CD4-positive, alpha-beta T cell (primary cell): ENCODE measurements at regions of chr21 and their contacts with region 1.

Region 1: GRCh38 chr21:28516991-28517592 is 475.6 kb downstream of the LTN1 start:
- DNase-seq: peak; percentile 33 to 77 (median 50)
- ATAC-seq: peak; percentile 87
- H3K4me3 ChIP-seq: no peak overlapping the region
- H3K4me3 Mint-ChIP-seq: no peak overlapping the region
- H3K27ac ChIP-seq: no peak overlapping the region
- H3K27ac Mint-ChIP-seq: no peak overlapping the region
- H3K4me1 ChIP-seq: no peaks in the 10 kb centered on the region
- H3K4me1 Mint-ChIP-seq: no peaks in the 10 kb centered on the region
- H3K27me3 ChIP-seq: no peaks in the 10 kb centered on the region
- H3K27me3 Mint-ChIP-seq: no peaks in the 10 kb centered on the region
- CTCF ChIP-seq: peak; percentile 66

Region 2: DNA sequence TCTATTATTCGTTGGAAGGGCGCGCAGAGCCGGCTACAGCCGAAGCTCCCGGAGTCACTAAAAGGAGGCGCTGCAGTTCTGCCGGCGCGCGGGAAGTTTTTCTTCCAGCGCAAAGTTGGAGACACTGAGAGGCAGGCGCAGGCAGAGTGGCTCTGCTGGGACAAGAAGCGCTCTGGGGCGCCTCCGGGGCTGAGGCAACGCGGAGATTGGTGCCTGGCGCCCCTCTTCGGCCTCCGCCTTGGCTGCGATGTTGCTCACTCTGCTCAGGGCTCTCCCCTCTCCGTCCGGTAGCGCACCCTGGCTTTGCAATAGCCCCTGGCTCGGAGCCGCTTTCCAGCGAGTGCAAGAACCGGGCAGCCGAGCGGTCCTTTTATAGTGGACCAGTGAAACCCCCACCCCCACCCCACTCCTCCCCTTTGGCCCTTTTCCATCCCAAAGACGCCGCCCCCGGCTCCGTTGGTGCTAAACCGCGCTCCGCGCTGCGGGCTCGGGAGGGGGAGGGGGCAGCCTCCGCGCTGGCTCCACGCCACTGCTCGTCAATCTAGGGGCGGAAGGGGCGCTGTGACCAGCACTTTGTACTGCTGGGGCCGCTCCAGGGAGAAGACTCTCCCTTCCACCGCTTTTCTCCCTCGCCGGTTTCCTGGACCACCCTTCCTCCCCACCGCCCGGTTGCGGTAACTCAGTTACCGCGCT is 1671.9 kb before region 1 on chr21 and contains the start of gene ADAMTS1:
- CTCF ChIA-PET with region 1: no interaction called
- POLR2A ChIA-PET with region 1: no interaction called
- intact Hi-C with region 1: loop called in 1 of 2 experiments (anchors 10 kb)
- DNase-seq: peak in 3 of 14 experiments; percentile 16 to 21 (median 21)
- ATAC-seq: no peak
- H3K4me3 ChIP-seq: peak within 1 kb of the TSS; percentile 37
- H3K4me3 Mint-ChIP-seq: peak within 1 kb of the TSS; percentile 84
- H3K27ac ChIP-seq: no peak within 1 kb of the TSS
- H3K27ac Mint-ChIP-seq: no peak within 1 kb of the TSS
- H3K4me1 ChIP-seq: peaks cover 40% of the 10 kb centered on the region
- H3K4me1 Mint-ChIP-seq: peaks cover 35% of the 10 kb centered on the region
- H3K27me3 ChIP-seq: peaks cover 41 to 60% of the 10 kb centered on the region in 2 experiments
- H3K27me3 Mint-ChIP-seq: peaks cover 81% of the 10 kb centered on the region
- CTCF ChIP-seq: no peak
- total RNA-seq, gene ADAMTS1: 0.08 to 0.25 TPM

Region 3: GRCh38 chr21:28867401-28867800 is 350.3 kb after region 1 on chr21:
- CTCF ChIA-PET with region 1: no interaction called
- POLR2A ChIA-PET with region 1: no interaction called
- intact Hi-C with region 1: loop called in 1 of 2 experiments (anchors 10 kb)
- DNase-seq: no peak
- ATAC-seq: no peak
- H3K4me3 ChIP-seq: no peak overlapping the region
- H3K4me3 Mint-ChIP-seq: no peak overlapping the region
- H3K27ac ChIP-seq: no peak overlapping the region
- H3K27ac Mint-ChIP-seq: no peak overlapping the region
- H3K4me1 ChIP-seq: no peaks in the 10 kb centered on the region
- H3K4me1 Mint-ChIP-seq: no peaks in the 10 kb centered on the region
- H3K27me3 ChIP-seq: no peaks in the 10 kb centered on the region
- H3K27me3 Mint-ChIP-seq: no peaks in the 10 kb centered on the region
- CTCF ChIP-seq: no peak

Region 4: GRCh38 chr21:28943631-28944030 is 426.5 kb after region 1 on chr21:
- CTCF ChIA-PET with region 1: no interaction called
- POLR2A ChIA-PET with region 1: no interaction called
- intact Hi-C with region 1: loop called (anchors 1 to 2 kb)
- DNase-seq: no peak
- ATAC-seq: no peak
- H3K4me3 ChIP-seq: no peak overlapping the region
- H3K4me3 Mint-ChIP-seq: no peak overlapping the region
- H3K27ac ChIP-seq: no peak overlapping the region
- H3K27ac Mint-ChIP-seq: no peak overlapping the region
- H3K4me1 ChIP-seq: no peaks in the 10 kb centered on the region
- H3K4me1 Mint-ChIP-seq: no peaks in the 10 kb centered on the region
- H3K27me3 ChIP-seq: no peaks in the 10 kb centered on the region
- H3K27me3 Mint-ChIP-seq: no peaks in the 10 kb centered on the region
- CTCF ChIP-seq: no peak